Adrenal gland (tissue), 19 donors: ENCODE measurements at regions of chr20 and their contacts with region 1.

Region 1: GRCh38 chr20:44367746-44368145 is 12.2 kb downstream of the HNF4A start:
- DNase-seq: no peak
- H3K4me3 ChIP-seq: no peak overlapping the region
- H3K27ac ChIP-seq: no peak overlapping the region
- H3K4me1 ChIP-seq: no peaks in the 10 kb centered on the region
- H3K27me3 ChIP-seq: no peaks in the 10 kb centered on the region
- CTCF ChIP-seq: no peak
- POLR2A ChIP-seq: no peak

Region 2: DNA sequence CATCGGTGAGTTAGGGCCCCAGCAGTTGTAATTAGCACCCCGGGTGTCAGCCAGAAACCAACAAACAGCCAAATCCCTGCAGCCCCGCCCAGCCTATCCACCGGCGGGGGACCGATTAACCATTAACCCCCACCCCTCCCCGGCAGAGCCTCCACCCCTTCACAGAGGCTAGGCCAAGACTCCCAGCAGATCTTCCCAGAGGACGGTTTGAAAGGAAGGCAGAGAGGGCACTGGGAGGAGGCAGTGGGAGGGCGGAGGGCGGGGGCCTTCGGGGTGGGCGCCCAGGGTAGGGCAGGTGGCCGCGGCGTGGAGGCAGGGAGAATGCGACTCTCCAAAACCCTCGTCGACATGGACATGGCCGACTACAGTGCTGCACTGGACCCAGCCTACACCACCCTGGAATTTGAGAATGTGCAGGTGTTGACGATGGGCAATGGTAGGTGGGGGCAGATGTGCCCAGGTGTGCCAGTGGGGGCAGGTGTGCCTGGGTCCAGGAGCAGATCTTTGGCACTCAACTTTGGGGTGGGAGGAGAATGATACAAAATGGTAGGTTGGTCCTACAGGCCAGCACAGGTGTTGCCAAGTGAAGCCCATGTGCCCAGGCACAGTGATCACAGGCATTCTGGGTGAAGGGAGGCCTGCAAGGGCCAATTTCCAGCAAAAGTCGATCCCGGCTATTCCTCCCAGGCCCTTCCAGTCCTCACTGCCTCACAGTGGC is 33.5 kb after region 1 on chr20:
- intact Hi-C with region 1: loop called in 1 of 2 experiments (anchors 2 kb)
- DNase-seq: peak in 1 of 7 donors; percentile 10
- H3K4me3 ChIP-seq: no peak overlapping the region
- H3K27ac ChIP-seq: no peak overlapping the region
- H3K4me1 ChIP-seq: no peaks in the 10 kb centered on the region
- H3K27me3 ChIP-seq: no peaks in the 10 kb centered on the region
- CTCF ChIP-seq: no peak
- POLR2A ChIP-seq: no peak